ENCODE measurements at regions of chr3 and their contacts with region 1.

Region 1: GRCh38 chr3:150868282-150868681 is 37.0 kb downstream of the MINDY4B start:
- DNase-seq: no peak
- ATAC-seq: no peak
- H3K4me3 ChIP-seq: no peak overlapping the region
- H3K27ac ChIP-seq: no peak overlapping the region
- H3K4me1 ChIP-seq: no peaks in the 10 kb centered on the region
- H3K27me3 ChIP-seq: no peaks in the 10 kb centered on the region
- CTCF ChIP-seq: no peak

Region 2: DNA sequence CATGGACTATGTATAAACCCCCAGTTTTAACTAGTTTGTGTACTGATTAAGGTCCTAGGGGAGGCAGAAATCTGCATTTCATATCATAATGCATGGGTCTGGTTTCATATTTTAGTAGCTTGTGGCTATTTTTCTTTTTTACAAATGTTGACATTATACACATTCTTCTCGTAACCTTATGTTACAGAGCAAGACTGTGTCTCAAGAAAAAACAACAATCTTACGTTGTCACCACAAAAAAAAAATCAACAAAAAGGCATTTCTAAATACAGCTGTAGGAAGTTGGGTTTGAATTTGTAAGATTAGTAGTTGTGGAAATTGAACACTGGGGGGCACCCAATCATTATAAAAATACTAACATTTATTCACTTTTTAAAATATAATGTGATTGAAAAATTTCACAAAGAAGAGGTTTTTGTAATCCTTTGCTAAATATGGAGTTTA is 339.9 kb before region 1 on chr3:
- intact Hi-C with region 1: loop called in 1 of 2 experiments (anchors 10 kb)
- DNase-seq: no peak
- ATAC-seq: no peak
- H3K4me3 ChIP-seq: no peak overlapping the region
- H3K27ac ChIP-seq: no peak overlapping the region
- H3K4me1 ChIP-seq: no peaks in the 10 kb centered on the region
- H3K27me3 ChIP-seq: peaks cover 0 to 3% (median 0%) of the 10 kb centered on the region in 3 donors
- CTCF ChIP-seq: no peak

Region 3: DNA sequence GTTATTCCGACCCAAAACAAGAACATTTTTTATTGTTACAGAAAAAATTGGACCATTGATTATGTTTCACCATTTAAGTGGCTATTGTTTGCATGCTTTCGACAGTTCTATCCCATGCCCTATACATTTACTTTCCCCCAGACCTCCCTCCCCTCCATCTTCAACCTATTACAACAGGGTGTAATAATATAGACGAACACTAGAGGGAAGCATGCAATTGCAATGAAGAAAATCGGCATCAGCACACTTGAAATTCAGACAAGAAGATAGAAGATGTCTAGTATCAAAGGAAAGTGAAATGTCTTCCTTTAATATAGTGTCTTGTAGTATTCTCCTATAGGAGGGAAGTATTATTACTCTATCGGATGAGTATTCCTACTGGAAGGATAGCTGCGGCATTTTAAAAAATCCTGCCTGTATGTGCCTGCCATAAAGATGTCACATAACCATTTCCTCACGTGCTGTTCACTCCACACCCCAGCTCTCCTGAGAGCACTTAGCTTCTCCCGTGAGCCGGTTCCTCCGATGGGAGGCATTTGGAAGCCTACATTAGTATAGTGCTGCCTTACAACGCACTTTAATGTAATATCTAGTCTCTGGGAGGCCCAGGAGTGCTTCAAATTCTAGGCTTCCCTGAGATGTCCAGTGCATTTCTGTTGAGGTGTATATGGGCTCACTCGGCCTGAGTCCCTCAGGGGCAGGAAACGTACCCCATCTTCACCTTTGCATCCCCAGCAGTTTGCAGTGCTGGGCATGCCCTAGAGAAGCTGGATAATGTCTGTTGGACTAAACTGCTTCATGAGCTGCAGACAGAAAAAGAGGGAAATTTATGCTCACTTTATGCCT is 146.8 kb before region 1 on chr3:
- intact Hi-C with region 1: loop called (anchors 2 kb)
- DNase-seq: no peak
- ATAC-seq: peak; percentile 65 to 93 (median 77)
- H3K4me3 ChIP-seq: no peak overlapping the region
- H3K27ac ChIP-seq: no peak overlapping the region
- H3K4me1 ChIP-seq: no peaks in the 10 kb centered on the region
- H3K27me3 ChIP-seq: no peaks in the 10 kb centered on the region
- CTCF ChIP-seq: peak; percentile 87

Region 4: GRCh38 chr3:150787741-150788370 is 80.4 kb before region 1 on chr3:
- intact Hi-C with region 1: loop called (anchors 5 kb)
- DNase-seq: peak; percentile 84 to 91
- ATAC-seq: peak; percentile 76 to 96 (median 86)
- H3K4me3 ChIP-seq: no peak overlapping the region
- H3K27ac ChIP-seq: no peak overlapping the region
- H3K4me1 ChIP-seq: no peaks in the 10 kb centered on the region
- H3K27me3 ChIP-seq: peaks cover 0 to 2% (median 0%) of the 10 kb centered on the region in 3 donors
- CTCF ChIP-seq: peak; percentile 93

Region 5: DNA sequence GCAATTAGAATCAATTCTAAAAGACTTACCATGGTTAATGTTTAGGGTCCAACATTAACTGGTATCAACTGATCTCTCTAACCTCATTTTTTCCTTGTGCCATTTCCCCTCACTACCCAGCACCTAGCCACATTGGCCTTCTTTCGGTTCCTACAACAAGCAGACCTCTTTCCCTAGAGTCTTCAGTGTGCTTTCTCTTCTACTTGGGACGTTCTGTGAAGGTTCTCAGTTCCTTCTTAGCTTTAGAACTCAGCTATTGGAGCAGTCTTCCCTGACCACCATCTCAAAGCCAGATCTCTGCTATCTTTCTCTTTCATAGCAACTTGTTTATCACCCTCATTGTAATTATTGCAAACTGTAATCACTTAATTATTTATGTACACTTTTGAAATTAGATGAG is 68.4 kb after region 1 on chr3:
- intact Hi-C with region 1: no loop called
- DNase-seq: no peak
- ATAC-seq: no peak
- H3K4me3 ChIP-seq: no peak overlapping the region
- H3K27ac ChIP-seq: no peak overlapping the region
- H3K4me1 ChIP-seq: no peaks in the 10 kb centered on the region
- H3K27me3 ChIP-seq: no peaks in the 10 kb centered on the region
- CTCF ChIP-seq: no peak